PC-3 (cell line): ENCODE measurements at regions of chr13 and their contacts with region 1.

Region 1: DNA sequence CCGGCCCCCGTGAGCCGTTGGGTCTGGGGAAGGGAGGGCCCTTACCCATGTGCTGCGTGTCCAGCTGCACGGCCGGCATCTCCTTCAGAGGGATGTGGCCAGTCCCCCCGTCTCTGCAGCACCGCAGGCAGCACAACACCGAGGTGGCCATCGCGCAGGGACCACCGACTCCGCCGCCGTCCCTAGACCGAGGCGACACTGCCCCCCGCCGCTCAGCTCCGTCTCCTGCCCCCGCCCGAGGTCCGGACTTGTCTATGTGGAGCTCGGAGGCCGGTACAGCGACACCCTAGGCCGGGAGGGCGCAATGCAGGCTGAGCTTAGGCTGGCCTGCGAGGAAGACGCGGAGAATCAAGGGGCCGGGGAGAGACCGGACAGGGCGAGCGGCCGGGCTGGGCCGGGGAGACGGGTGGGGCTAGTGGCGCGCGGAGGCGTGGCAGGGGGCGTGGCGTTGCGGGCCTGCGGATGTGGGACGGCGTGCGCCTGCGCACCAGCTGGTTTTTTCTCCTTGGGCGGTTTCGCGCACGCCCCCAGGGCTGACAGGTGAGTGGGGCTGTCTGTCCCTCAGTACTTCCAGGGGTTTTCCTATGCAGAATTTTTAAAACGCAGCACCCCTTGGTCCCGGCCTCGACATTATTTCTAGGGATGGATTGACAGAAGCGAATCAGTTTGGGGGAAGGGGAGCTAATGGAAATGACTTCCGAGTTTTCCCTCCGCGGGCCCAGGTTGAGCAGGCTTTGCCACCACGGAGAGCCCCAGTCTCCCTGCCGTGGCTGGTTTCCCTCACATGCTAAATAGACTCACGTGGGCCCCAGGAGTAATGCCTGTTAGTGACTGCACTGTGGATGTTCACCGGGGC is at the start of gene SPRYD7:
- DNase-seq: peak; percentile 93
- ATAC-seq: peak; percentile 94
- H3K4me3 ChIP-seq: peak within 1 kb of the TSS; percentile 97
- H3K27ac ChIP-seq: peak within 1 kb of the TSS; percentile 22
- H3K4me1 ChIP-seq: peaks cover 15% of the 10 kb centered on the region
- H3K27me3 ChIP-seq: no peaks in the 10 kb centered on the region
- CTCF ChIP-seq: peak; percentile 72
- total RNA-seq, gene SPRYD7: 6.3 and 6.8 TPM in 2 replicates

Region 2: GRCh38 chr13:49539313-49539712 is 397.0 kb before region 1 on chr13:
- CTCF ChIA-PET with region 1: no interaction called
- POLR2A ChIA-PET with region 1: interaction called, 13 read pairs
- intact Hi-C with region 1: no loop called
- DNase-seq: no peak
- ATAC-seq: no peak
- H3K4me3 ChIP-seq: no peak overlapping the region
- H3K27ac ChIP-seq: no peak overlapping the region
- H3K4me1 ChIP-seq: no peaks in the 10 kb centered on the region
- H3K27me3 ChIP-seq: no peaks in the 10 kb centered on the region
- CTCF ChIP-seq: no peak

Region 3: DNA sequence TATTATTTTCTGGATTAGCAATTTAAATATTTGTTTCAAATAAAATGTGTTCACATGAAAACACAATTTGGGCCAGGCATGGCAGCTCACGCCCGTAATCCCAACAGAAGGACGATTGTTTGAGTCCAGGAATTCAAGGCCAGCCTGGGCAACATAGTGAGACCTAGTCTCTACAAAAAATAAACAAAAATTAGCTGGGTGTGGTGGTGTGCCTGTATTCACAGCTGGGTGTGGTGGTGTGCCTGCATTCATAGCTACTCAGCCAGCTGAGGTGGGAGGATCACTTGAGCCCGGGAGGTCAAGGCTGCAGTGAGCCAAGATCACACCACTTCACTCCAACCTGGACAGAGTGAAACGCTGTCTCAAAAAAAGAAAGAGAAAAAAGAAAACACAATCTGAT is 190.2 kb before region 1 on chr13:
- CTCF ChIA-PET with region 1: no interaction called
- POLR2A ChIA-PET with region 1: no interaction called
- intact Hi-C with region 1: no loop called
- DNase-seq: no peak
- ATAC-seq: no peak; the same call in 1 of the 2 replicates
- H3K4me3 ChIP-seq: no peak overlapping the region
- H3K27ac ChIP-seq: no peak overlapping the region
- H3K4me1 ChIP-seq: no peaks in the 10 kb centered on the region
- H3K27me3 ChIP-seq: no peaks in the 10 kb centered on the region
- CTCF ChIP-seq: no peak

Region 4: GRCh38 chr13:49844181-49844580 is 92.1 kb before region 1 on chr13:
- CTCF ChIA-PET with region 1: interaction called, 17 read pairs
- POLR2A ChIA-PET with region 1: no interaction called
- intact Hi-C with region 1: no loop called
- DNase-seq: no peak
- ATAC-seq: no peak
- H3K4me3 ChIP-seq: no peak overlapping the region
- H3K27ac ChIP-seq: no peak overlapping the region
- H3K4me1 ChIP-seq: no peaks in the 10 kb centered on the region
- H3K27me3 ChIP-seq: no peaks in the 10 kb centered on the region
- CTCF ChIP-seq: no peak

Region 5: DNA sequence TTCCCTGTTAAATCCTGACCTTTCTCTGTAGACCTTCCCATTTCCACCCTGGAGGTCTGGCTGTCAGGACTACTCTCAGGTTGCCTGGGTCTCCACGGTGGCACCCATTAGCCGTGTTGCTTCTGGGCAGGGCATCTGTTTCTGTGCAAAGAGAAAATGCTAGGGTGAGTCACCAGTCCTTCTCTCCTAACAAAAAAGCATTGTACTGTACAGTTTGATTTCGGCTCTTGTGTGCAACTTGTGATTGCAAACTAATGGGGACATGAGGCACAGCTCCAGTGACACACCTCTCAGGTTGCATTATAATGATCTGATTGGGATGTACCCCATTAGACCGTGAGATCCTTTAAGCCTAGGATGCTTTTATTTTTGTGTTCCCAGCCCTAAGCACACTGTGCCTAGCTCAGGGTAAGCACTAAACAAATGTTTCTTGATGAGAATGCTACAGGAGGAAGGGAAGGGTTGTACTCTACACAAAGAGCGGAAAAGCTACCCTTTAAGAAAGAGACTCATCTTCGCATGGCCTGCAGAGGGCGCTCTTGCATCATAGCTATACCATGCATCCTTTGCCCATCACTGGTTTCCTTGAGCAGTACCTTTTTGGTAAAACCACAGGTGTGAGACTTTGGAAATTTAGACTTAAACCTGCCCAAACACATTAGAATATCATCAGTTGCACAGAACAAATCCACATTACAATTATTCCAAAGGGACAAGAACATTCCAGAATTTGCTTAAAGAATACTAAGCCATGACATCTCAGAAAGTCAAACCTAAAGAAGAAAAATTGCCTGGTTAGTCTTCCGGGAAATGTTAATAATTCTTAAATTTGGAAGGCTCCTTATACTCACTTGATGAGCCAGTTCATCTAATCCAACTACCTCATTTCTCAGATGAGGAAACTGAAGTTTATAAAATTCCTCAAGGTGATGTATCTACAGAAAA is 40.3 kb after region 1 on chr13:
- CTCF ChIA-PET with region 1: interaction called, 10 read pairs
- POLR2A ChIA-PET with region 1: no interaction called
- intact Hi-C with region 1: loop called (anchors 2 kb)
- DNase-seq: peak; percentile 72
- ATAC-seq: peak; percentile 91
- H3K4me3 ChIP-seq: peak overlapping the region; percentile 41; the same call in 1 of the 2 replicates
- H3K27ac ChIP-seq: peak overlapping the region; percentile 79
- H3K4me1 ChIP-seq: peaks cover 13% of the 10 kb centered on the region
- H3K27me3 ChIP-seq: no peaks in the 10 kb centered on the region
- CTCF ChIP-seq: peak; percentile 93

Region 6: GRCh38 chr13:50071379-50071778 is 135.1 kb after region 1 on chr13:
- CTCF ChIA-PET with region 1: no interaction called
- POLR2A ChIA-PET with region 1: interaction called, 11 read pairs
- intact Hi-C with region 1: no loop called
- DNase-seq: no peak
- ATAC-seq: no peak
- H3K4me3 ChIP-seq: no peak overlapping the region
- H3K27ac ChIP-seq: no peak overlapping the region
- H3K4me1 ChIP-seq: peaks cover 10% of the 10 kb centered on the region
- H3K27me3 ChIP-seq: no peaks in the 10 kb centered on the region
- CTCF ChIP-seq: no peak